GM13976 (cell line): ENCODE measurements at regions of chr3 and their contacts with region 1.

Region 1: GRCh38 chr3:149104516-149104915 is 18.2 kb upstream of the HLTF start:
- DNase-seq: no peak
- CTCF ChIP-seq: no peak

Region 2: GRCh38 chr3:148955544-148956346 is 148.8 kb before region 1 on chr3:
- in situ Hi-C with region 1: loop called (anchors 10 kb)
- DNase-seq: peak; percentile 18
- CTCF ChIP-seq: peak; percentile 35

Region 3: GRCh38 chr3:149366941-149367840 is 262.7 kb after region 1 on chr3:
- in situ Hi-C with region 1: no loop called
- DNase-seq: no peak
- CTCF ChIP-seq: no peak